B cell (primary cell): ENCODE measurements at regions of chr12 and their contacts with region 1.

Region 1: GRCh38 chr12:113735131-113735530 is 231.0 kb downstream of the RBM19 start:
- DNase-seq: no peak
- ATAC-seq: no peak
- H3K4me3 ChIP-seq: no peak overlapping the region
- H3K4me3 Mint-ChIP-seq: no peak overlapping the region
- H3K27ac ChIP-seq: no peak overlapping the region
- H3K27ac Mint-ChIP-seq: no peak overlapping the region
- H3K4me1 ChIP-seq: no peaks in the 10 kb centered on the region
- H3K4me1 Mint-ChIP-seq: no peaks in the 10 kb centered on the region
- H3K27me3 ChIP-seq: peaks cover 0 to 3% (median 0%) of the 10 kb centered on the region in 4 experiments
- H3K27me3 Mint-ChIP-seq: peaks cover 30% of the 10 kb centered on the region
- CTCF ChIP-seq: no peak

Region 2: GRCh38 chr12:113310489-113310888 is 424.6 kb before region 1 on chr12:
- CTCF ChIA-PET with region 1: no interaction called
- POLR2A ChIA-PET with region 1: no interaction called
- intact Hi-C with region 1: loop called (anchors 10 kb)
- DNase-seq: no peak
- ATAC-seq: no peak
- H3K4me3 ChIP-seq: no peak overlapping the region
- H3K4me3 Mint-ChIP-seq: no peak overlapping the region
- H3K27ac ChIP-seq: no peak overlapping the region
- H3K27ac Mint-ChIP-seq: no peak overlapping the region
- H3K4me1 ChIP-seq: no peaks in the 10 kb centered on the region
- H3K4me1 Mint-ChIP-seq: no peaks in the 10 kb centered on the region
- H3K27me3 ChIP-seq: no peaks in the 10 kb centered on the region
- H3K27me3 Mint-ChIP-seq: no peaks in the 10 kb centered on the region
- CTCF ChIP-seq: no peak

Region 3: GRCh38 chr12:113949321-113950305 is 214.5 kb after region 1 on chr12:
- CTCF ChIA-PET with region 1: no interaction called
- POLR2A ChIA-PET with region 1: no interaction called
- intact Hi-C with region 1: no loop called
- DNase-seq: no peak
- ATAC-seq: no peak
- H3K4me3 ChIP-seq: no peak overlapping the region
- H3K4me3 Mint-ChIP-seq: no peak overlapping the region
- H3K27ac ChIP-seq: no peak overlapping the region
- H3K27ac Mint-ChIP-seq: no peak overlapping the region
- H3K4me1 ChIP-seq: no peaks in the 10 kb centered on the region
- H3K4me1 Mint-ChIP-seq: no peaks in the 10 kb centered on the region
- H3K27me3 ChIP-seq: no peaks in the 10 kb centered on the region
- H3K27me3 Mint-ChIP-seq: no peaks in the 10 kb centered on the region
- CTCF ChIP-seq: no peak